Endothelial cell of umbilical vein (primary cell): ENCODE measurements at regions of chr3 and their contacts with region 1.

Region 1: DNA sequence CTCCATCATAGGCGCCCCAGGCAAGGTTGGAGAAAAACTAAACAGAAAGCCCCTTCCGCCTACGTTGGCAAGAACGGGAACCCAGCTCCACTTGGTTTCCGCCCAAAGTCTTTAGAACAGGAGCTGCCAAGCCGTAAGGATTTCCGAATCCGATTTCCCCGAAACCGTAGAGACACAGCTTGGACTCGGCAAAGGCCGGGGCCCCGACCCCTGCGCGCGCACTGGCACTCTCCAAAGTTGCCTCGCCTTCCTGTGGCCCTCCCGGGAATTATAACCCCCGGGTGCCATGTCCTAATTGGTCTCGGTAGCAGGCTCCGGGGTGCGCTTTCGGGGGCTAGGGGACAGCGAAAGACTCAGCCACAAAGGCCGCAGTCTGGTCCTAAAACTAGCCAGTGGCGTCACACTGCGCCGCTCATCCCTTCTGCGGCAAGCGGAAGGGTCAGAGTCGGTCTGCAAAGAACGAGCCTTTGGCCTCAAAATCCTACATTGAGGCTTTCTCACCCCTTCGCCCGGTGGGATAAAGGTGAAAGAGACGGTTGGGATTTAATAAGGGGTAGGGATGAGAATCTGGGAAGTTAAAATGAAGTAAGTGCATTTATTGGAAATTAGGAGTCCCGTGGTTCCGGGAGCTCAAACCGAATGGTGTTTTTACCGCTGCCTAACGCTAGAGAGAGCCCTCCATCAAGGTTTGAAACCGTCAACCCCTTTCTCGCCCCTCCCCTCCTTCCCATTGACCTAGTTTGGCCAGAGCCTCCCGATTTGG is 6.8 kb downstream of the BCL6 start:
- DNase-seq: peak; percentile 87
- H3K4me3 ChIP-seq: peak overlapping the region; percentile 47 to 82 (median 58)
- H3K27ac ChIP-seq: peak overlapping the region; percentile 94
- H3K4me1 ChIP-seq: peaks cover 46% of the 10 kb centered on the region
- H3K27me3 ChIP-seq: no peaks in the 10 kb centered on the region
- CTCF ChIP-seq: peak; percentile 79 to 83
- POLR2A ChIP-seq: no peak

Region 2: GRCh38 chr3:187465503-187465902 is 273.0 kb before region 1 on chr3:
- CTCF ChIA-PET with region 1: no interaction called
- POLR2A ChIA-PET with region 1: no interaction called
- dilution Hi-C with region 1: no loop called
- intact Hi-C with region 1: no loop called
- DNase-seq: no peak
- H3K4me3 ChIP-seq: no peak overlapping the region
- H3K27ac ChIP-seq: no peak overlapping the region
- H3K4me1 ChIP-seq: no peaks in the 10 kb centered on the region
- H3K27me3 ChIP-seq: no peaks in the 10 kb centered on the region
- CTCF ChIP-seq: no peak
- POLR2A ChIP-seq: no peak

Region 3: DNA sequence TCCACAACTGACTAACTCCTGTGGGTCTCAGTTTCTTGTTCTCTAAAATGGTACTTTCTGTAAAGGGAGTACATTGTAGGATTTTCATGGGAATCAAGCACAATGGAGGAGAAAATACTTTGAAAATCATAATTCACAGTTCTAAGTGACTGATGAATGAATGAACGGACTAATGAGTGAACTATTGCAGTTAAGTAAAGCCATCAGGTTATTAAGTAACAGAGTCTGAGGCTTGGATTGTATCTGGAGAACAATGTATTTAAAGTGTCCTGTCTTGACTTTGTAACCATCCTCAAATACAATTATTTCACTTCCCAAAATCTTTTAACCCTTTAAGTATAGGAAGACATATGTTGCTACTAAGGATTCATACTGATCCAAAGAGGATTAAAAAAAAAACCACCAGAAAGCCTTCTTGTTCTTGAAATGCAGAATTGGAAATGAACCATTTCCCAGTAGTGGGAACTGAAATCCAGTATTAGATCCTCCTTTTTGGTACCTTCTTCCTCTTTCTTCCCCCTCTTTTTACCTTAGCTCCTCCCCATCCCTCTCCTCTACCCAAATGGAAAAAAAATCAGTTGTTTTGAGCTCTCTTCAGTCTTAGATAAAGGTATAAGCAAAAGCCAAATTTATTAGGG is 19.9 kb after region 1 on chr3:
- CTCF ChIA-PET with region 1: no interaction called
- POLR2A ChIA-PET with region 1: no interaction called
- dilution Hi-C with region 1: no loop called
- intact Hi-C with region 1: no loop called
- DNase-seq: no peak
- H3K4me3 ChIP-seq: no peak overlapping the region
- H3K27ac ChIP-seq: no peak overlapping the region
- H3K4me1 ChIP-seq: no peaks in the 10 kb centered on the region
- H3K27me3 ChIP-seq: peaks cover 2 to 9% of the 10 kb centered on the region in 2 experiments
- CTCF ChIP-seq: no peak
- POLR2A ChIP-seq: no peak

Region 4: GRCh38 chr3:188270423-188270972 is 532.0 kb after region 1 on chr3:
- CTCF ChIA-PET with region 1: interaction called, 11 read pairs
- POLR2A ChIA-PET with region 1: interaction called, 3 read pairs
- dilution Hi-C with region 1: no loop called
- intact Hi-C with region 1: no loop called
- DNase-seq: peak; percentile 84
- H3K4me3 ChIP-seq: no peak overlapping the region
- H3K27ac ChIP-seq: peak overlapping the region; percentile 70
- H3K4me1 ChIP-seq: peaks cover 69% of the 10 kb centered on the region
- H3K27me3 ChIP-seq: no peaks in the 10 kb centered on the region
- CTCF ChIP-seq: no peak
- POLR2A ChIP-seq: no peak

Region 5: GRCh38 chr3:188531210-188531609 is 792.7 kb after region 1 on chr3:
- CTCF ChIA-PET with region 1: interaction called, 12 read pairs
- POLR2A ChIA-PET with region 1: no interaction called
- dilution Hi-C with region 1: no loop called
- intact Hi-C with region 1: no loop called
- DNase-seq: peak; percentile 87
- H3K4me3 ChIP-seq: no peak overlapping the region
- H3K27ac ChIP-seq: peak overlapping the region; percentile 85
- H3K4me1 ChIP-seq: peaks cover 37% of the 10 kb centered on the region
- H3K27me3 ChIP-seq: no peaks in the 10 kb centered on the region
- CTCF ChIP-seq: no peak
- POLR2A ChIP-seq: no peak

Region 6: DNA sequence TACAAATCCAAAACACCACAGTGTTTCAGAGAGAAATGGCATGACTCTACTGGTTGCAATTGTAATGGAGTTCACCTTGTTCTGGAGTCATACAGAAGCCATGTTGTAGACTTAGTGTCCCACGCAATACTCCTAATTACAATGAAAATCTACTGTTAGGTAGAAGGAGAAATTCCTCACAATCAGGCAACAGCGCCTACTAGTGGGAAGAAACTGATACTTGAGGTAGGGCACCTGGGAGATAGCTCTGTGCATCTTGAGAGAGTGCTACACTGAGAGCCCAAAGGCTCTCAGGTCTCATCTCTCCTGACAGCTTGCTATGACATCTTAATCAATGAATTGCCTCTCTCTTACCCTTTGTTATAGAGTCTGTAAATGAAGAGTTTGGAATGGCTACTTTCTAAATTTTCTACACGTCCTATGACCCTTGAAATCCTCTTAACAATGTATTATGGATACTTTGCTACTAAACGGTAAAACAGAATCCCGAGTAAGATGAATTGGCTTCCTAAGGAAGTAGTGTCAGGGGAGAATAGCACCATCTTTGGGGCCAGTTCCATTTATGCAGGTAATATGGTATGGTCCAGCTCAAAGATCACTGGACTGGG is 1010.6 kb after region 1 on chr3:
- CTCF ChIA-PET with region 1: interaction called, 16 read pairs
- POLR2A ChIA-PET with region 1: no interaction called
- dilution Hi-C with region 1: no loop called
- intact Hi-C with region 1: loop called (anchors 1 kb)
- DNase-seq: peak; percentile 9
- H3K4me3 ChIP-seq: no peak overlapping the region
- H3K27ac ChIP-seq: no peak overlapping the region
- H3K4me1 ChIP-seq: no peaks in the 10 kb centered on the region
- H3K27me3 ChIP-seq: no peaks in the 10 kb centered on the region
- CTCF ChIP-seq: peak; percentile 53 to 56
- POLR2A ChIP-seq: no peak

Region 7: GRCh38 chr3:188937389-188937788 is 1198.9 kb after region 1 on chr3:
- CTCF ChIA-PET with region 1: interaction called, 21 read pairs
- POLR2A ChIA-PET with region 1: interaction called, 5 read pairs
- dilution Hi-C with region 1: no loop called
- intact Hi-C with region 1: loop called (anchors 1 kb)
- DNase-seq: peak; percentile 90
- H3K4me3 ChIP-seq: no peak overlapping the region
- H3K27ac ChIP-seq: no peak overlapping the region
- H3K4me1 ChIP-seq: peaks cover 18% of the 10 kb centered on the region
- H3K27me3 ChIP-seq: no peaks in the 10 kb centered on the region
- CTCF ChIP-seq: no peak
- POLR2A ChIP-seq: no peak

Region 8: GRCh38 chr3:189041482-189042090 is 1303.1 kb after region 1 on chr3:
- CTCF ChIA-PET with region 1: interaction called, 201 read pairs
- POLR2A ChIA-PET with region 1: no interaction called
- dilution Hi-C with region 1: no loop called
- intact Hi-C with region 1: loop called (anchors 1 kb)
- DNase-seq: peak; percentile 67
- H3K4me3 ChIP-seq: no peak overlapping the region
- H3K27ac ChIP-seq: no peak overlapping the region
- H3K4me1 ChIP-seq: no peaks in the 10 kb centered on the region
- H3K27me3 ChIP-seq: peaks cover 0 to 3% of the 10 kb centered on the region in 2 experiments
- CTCF ChIP-seq: peak; percentile 45 to 56
- POLR2A ChIP-seq: no peak